OCI-LY7 (cell line): ENCODE measurements at regions of chr20 and their contacts with region 1.

Region 1: DNA sequence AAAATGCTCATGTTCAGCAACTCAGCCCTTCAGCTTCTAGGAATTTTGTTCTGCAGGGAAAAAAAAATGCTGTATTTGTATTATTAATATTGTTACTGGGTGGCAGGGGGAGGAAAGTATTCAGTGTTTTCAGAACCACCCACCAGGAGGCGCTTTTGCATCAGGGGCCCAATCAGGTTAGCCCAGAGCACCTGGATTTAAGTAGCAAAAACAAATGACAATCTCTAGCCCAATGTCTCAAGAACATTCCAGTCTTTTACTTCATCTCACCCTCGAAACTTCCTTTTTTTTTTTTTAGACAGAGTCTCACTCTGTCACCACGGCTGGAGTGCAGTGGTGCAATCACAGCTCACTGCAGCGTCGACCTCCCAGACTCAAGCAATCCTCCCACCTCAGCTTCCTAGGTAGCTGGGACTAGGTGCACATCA is 635 bp upstream of the C20orf203 start:
- DNase-seq: peak; percentile 83
- H3K4me3 ChIP-seq: no peak overlapping the region
- H3K27ac ChIP-seq: peak overlapping the region; percentile 96
- H3K4me1 ChIP-seq: peaks cover 72% of the 10 kb centered on the region
- CTCF ChIP-seq: peak; percentile 98

Region 2: GRCh38 chr20:32762149-32762753 is 87.9 kb after region 1 on chr20 and contains the start of gene DNMT3B:
- CTCF ChIA-PET with region 1: interaction called, 12 read pairs
- POLR2A ChIA-PET with region 1: interaction called, 16 read pairs
- intact Hi-C with region 1: loop called (anchors 5 kb)
- DNase-seq: peak; percentile 91
- H3K4me3 ChIP-seq: peak within 1 kb of the TSS; percentile 81
- H3K27ac ChIP-seq: peak within 1 kb of the TSS; percentile 58
- H3K4me1 ChIP-seq: peaks cover 33% of the 10 kb centered on the region
- CTCF ChIP-seq: peak; percentile 26; the same call in 1 of the 2 replicates
- total RNA-seq, gene DNMT3B: 11.4 and 12.1 TPM in 2 replicates